CD8-positive, alpha-beta T cell (primary cell): ENCODE measurements at regions of chr16 and their contacts with region 1.

Region 1: DNA sequence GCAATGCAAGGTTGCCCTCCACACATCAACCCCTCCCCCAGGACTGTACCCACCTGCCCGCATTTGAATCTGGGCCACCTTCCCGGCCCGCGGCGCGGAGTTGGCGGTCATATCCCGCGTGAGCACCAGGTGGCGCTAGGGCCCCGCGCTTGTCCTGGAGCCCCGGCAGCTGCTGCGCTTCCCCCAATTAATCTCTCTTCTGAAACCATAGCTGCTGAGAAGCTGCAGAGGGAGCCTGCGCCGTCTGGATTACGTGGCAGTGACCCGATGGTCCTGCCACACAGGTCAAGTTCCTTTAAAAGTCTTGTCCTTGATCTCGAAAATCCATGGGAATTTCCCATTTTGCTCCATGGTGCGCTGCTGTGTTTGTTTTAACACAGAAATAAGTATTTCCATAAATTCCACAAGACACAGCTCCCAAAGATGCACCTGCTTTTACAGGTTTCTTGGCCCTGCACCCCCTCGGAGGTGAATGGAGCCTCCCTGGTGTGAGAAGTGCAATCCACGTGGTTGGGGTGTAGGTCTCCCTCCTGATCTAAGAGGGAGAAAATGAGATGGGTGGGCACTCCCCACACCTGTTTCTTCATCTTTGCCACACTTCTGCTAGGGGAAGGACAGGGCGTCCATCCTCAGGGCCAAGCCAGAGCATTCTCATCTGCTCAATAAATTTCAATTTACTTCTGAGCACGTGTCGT is 22.1 kb downstream of the COX4I1 start:
- DNase-seq: peak; percentile 68 to 91 (median 78)
- ATAC-seq: peak; percentile 92
- H3K4me3 ChIP-seq: no peak overlapping the region
- H3K4me3 Mint-ChIP-seq: no peak overlapping the region
- H3K27ac ChIP-seq: no peak overlapping the region
- H3K27ac Mint-ChIP-seq: no peak overlapping the region
- H3K4me1 ChIP-seq: no peaks in the 10 kb centered on the region
- H3K4me1 Mint-ChIP-seq: peaks cover 6% of the 10 kb centered on the region
- H3K27me3 ChIP-seq: no peaks in the 10 kb centered on the region
- H3K27me3 Mint-ChIP-seq: no peaks in the 10 kb centered on the region
- CTCF ChIP-seq: peak; percentile 96

Region 2: DNA sequence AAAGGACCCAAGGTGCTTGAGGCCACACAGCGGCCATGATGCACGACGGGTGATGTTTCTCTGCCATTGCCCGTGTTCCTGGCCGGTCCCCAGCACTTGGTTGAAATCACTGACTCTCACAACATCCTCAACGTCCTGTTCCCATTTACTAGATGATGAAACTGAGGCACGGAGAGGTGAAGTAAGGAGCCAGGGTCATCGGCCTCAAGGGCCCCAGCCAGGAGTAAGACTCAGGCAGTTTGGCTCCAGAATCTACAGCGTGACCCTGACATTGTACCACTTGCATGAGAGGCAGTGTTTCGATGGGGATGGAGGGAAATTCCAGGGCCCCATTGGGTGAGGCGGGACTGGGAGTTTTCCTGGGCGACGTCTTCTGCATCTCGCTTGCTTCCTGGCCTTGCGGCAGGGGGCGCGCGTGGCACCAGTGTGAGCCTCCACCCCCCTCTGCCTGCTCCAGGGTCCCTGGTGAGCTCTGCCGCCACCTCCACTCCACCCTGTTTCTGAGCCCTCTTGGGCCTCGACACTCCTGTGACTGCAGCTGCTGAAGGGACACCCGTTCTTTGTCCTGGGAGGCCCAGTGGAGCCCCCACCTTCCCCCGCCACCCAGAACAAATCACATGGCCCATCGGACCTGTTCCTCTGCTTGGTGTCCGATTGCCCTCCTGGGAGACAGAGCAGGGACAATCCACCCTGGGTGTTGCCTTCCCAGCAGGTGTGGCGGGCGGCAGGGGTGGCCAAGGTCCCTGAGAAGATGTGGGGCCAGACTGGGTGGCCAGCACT is 341.4 kb before region 1 on chr16:
- CTCF ChIA-PET with region 1: no interaction called
- POLR2A ChIA-PET with region 1: no interaction called
- intact Hi-C with region 1: no loop called
- DNase-seq: peak in 4 of 9 experiments; percentile 19 to 45 (median 30)
- ATAC-seq: no peak
- H3K4me3 ChIP-seq: no peak overlapping the region
- H3K4me3 Mint-ChIP-seq: no peak overlapping the region
- H3K27ac ChIP-seq: no peak overlapping the region
- H3K27ac Mint-ChIP-seq: no peak overlapping the region
- H3K4me1 ChIP-seq: no peaks in the 10 kb centered on the region
- H3K4me1 Mint-ChIP-seq: no peaks in the 10 kb centered on the region
- H3K27me3 ChIP-seq: no peaks in the 10 kb centered on the region
- H3K27me3 Mint-ChIP-seq: no peaks in the 10 kb centered on the region
- CTCF ChIP-seq: no peak

Region 3: GRCh38 chr16:85935974-85936760 is 114.6 kb after region 1 on chr16:
- CTCF ChIA-PET with region 1: interaction called, 21 read pairs
- POLR2A ChIA-PET with region 1: no interaction called
- intact Hi-C with region 1: loop called in 1 of 2 experiments (anchors 5 kb)
- DNase-seq: peak; percentile 39 to 92 (median 71)
- ATAC-seq: peak; percentile 86
- H3K4me3 ChIP-seq: peak overlapping the region; percentile 25 to 43
- H3K4me3 Mint-ChIP-seq: peak overlapping the region; percentile 70
- H3K27ac ChIP-seq: peak overlapping the region; percentile 64 to 74
- H3K27ac Mint-ChIP-seq: peak overlapping the region; percentile 92
- H3K4me1 ChIP-seq: peaks cover 34% of the 10 kb centered on the region
- H3K4me1 Mint-ChIP-seq: peaks cover 39% of the 10 kb centered on the region
- H3K27me3 ChIP-seq: no peaks in the 10 kb centered on the region
- H3K27me3 Mint-ChIP-seq: no peaks in the 10 kb centered on the region
- CTCF ChIP-seq: no peak

Region 4: DNA sequence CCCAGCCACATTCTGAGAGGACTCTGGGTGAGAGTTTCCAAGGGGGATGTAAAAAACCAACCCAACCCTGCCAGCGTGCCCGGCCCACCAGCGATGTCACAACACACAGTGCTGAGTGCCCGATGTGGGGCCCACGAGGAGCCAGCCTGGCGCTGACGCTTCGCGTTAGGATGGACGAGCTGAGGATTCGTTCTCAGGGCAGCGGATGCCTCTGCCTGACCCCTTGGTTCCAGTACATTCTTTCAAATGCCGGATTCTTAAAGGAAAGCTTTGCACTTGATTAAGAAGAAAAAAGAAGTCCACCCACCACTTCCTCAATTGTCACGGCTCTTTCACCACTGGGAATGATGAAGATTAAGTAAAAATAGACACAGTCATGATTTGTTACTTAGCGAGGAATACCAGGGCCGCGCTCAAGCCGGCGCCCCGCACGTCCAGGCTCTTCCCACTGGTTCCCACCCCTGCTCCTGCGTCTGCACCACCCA is 156.7 kb after region 1 on chr16:
- CTCF ChIA-PET with region 1: interaction called, 464 read pairs
- POLR2A ChIA-PET with region 1: interaction called, 3 read pairs
- intact Hi-C with region 1: no loop called
- DNase-seq: no peak
- ATAC-seq: no peak
- H3K4me3 ChIP-seq: no peak overlapping the region
- H3K4me3 Mint-ChIP-seq: no peak overlapping the region
- H3K27ac ChIP-seq: no peak overlapping the region
- H3K27ac Mint-ChIP-seq: no peak overlapping the region
- H3K4me1 ChIP-seq: no peaks in the 10 kb centered on the region
- H3K4me1 Mint-ChIP-seq: no peaks in the 10 kb centered on the region
- H3K27me3 ChIP-seq: no peaks in the 10 kb centered on the region
- H3K27me3 Mint-ChIP-seq: no peaks in the 10 kb centered on the region
- CTCF ChIP-seq: no peak

Region 5: GRCh38 chr16:85995541-85996423 is 174.2 kb after region 1 on chr16:
- CTCF ChIA-PET with region 1: interaction called, 464 read pairs
- POLR2A ChIA-PET with region 1: no interaction called
- intact Hi-C with region 1: no loop called
- DNase-seq: no peak
- ATAC-seq: no peak
- H3K4me3 ChIP-seq: no peak overlapping the region
- H3K4me3 Mint-ChIP-seq: peak overlapping the region; percentile 53
- H3K27ac ChIP-seq: no peak overlapping the region
- H3K27ac Mint-ChIP-seq: no peak overlapping the region
- H3K4me1 ChIP-seq: peaks cover 6% of the 10 kb centered on the region
- H3K4me1 Mint-ChIP-seq: peaks cover 9% of the 10 kb centered on the region
- H3K27me3 ChIP-seq: no peaks in the 10 kb centered on the region
- H3K27me3 Mint-ChIP-seq: no peaks in the 10 kb centered on the region
- CTCF ChIP-seq: no peak

Region 6: DNA sequence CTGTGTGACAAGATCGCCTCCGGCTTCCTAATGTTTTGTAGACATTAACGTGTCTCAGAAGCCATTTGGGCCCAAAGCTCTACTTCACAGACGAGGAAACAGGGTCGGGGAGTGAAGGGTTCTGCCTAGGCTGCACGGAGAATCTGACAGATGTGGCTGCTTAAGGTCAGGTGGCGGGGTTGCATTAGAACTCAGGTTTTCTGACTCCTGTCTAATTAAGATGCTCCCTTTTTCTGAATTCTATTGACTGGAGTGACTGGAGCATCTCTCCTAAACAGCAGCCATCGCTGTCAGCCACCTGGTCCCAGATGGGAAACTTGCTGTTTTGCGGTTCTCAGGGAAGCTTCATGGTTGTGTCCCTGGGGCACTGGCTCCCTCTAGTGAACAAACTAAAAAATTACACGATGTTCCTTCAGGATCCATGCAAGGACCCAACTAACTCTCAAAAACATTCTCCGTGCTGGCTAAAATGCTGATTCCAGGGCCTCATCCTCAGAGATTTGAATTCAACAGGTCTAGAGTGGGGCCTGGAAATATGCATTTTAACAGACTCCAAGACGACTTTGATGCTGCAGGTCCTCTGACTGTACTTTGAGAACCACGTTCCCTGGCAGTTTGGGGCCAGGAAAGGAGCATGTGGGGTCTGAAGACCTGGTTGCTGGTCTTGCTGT is 194.7 kb after region 1 on chr16:
- CTCF ChIA-PET with region 1: interaction called, 126 read pairs
- POLR2A ChIA-PET with region 1: interaction called, 3 read pairs
- intact Hi-C with region 1: loop called (anchors 1 kb)
- DNase-seq: peak in 7 of 9 experiments; percentile 16 to 73 (median 26)
- ATAC-seq: no peak
- H3K4me3 ChIP-seq: no peak overlapping the region
- H3K4me3 Mint-ChIP-seq: no peak overlapping the region
- H3K27ac ChIP-seq: no peak overlapping the region
- H3K27ac Mint-ChIP-seq: no peak overlapping the region
- H3K4me1 ChIP-seq: no peaks in the 10 kb centered on the region
- H3K4me1 Mint-ChIP-seq: peaks cover 2% of the 10 kb centered on the region
- H3K27me3 ChIP-seq: peaks cover 0 to 5% of the 10 kb centered on the region in 2 experiments
- H3K27me3 Mint-ChIP-seq: peaks cover 28% of the 10 kb centered on the region
- CTCF ChIP-seq: peak; percentile 68

Region 7: GRCh38 chr16:86029131-86029741 is 207.6 kb after region 1 on chr16:
- CTCF ChIA-PET with region 1: interaction called, 18 read pairs
- POLR2A ChIA-PET with region 1: no interaction called
- intact Hi-C with region 1: no loop called
- DNase-seq: no peak
- ATAC-seq: no peak
- H3K4me3 ChIP-seq: no peak overlapping the region
- H3K4me3 Mint-ChIP-seq: no peak overlapping the region
- H3K27ac ChIP-seq: no peak overlapping the region
- H3K27ac Mint-ChIP-seq: no peak overlapping the region
- H3K4me1 ChIP-seq: no peaks in the 10 kb centered on the region
- H3K4me1 Mint-ChIP-seq: no peaks in the 10 kb centered on the region
- H3K27me3 ChIP-seq: no peaks in the 10 kb centered on the region
- H3K27me3 Mint-ChIP-seq: peaks cover 20% of the 10 kb centered on the region
- CTCF ChIP-seq: no peak